ENCODE measurements at regions of chr11 and their contacts with region 1.

Region 1: DNA sequence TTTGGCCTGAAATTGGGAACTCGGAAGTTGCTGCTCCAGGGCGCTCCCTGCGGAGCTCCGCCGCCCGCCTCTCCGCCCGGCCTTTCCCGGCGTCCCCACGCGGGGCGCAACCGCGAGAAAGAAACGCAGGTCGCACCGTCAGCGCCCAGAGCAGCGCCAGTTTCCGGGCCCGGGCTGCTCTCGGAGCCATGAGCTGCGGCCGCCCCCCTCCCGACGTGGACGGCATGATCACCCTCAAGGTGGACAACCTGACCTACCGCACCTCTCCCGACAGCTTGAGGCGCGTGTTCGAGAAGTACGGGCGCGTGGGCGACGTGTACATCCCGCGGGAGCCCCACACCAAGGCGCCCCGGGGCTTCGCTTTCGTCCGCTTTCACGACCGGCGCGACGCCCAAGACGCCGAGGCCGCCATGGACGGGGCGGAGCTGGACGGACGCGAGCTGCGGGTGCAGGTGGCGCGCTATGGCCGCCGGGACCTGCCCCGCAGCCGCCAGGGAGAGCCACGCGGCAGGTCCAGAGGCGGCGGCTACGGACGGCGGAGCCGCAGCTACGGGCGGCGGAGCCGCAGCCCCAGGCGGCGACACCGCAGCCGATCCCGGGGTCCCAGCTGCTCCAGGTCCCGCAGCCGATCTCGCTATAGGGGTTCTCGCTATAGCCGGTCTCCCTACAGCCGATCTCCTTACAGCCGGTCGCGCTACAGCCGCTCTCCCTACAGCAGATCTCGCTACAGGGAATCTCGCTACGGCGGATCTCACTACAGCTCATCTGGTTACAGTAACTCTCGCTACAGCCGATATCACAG is 521 bp downstream of the SRSF8 start:
- DNase-seq: peak; percentile 90
- ATAC-seq: peak; percentile 88 to 90

Region 2: GRCh38 chr11:94973099-94973968 is 93.9 kb before region 1 on chr11 and contains the starts of genes CWC15 and KDM4D:
- intact Hi-C with region 1: loop called in 1 of 2 experiments (anchors 10 kb)
- DNase-seq: peak; percentile 96
- ATAC-seq: peak; percentile 100
- total RNA-seq, gene CWC15: 60.8 to 65.5 TPM
- total RNA-seq, gene KDM4D: 0.80 to 0.89 TPM

Region 3: GRCh38 chr11:95705485-95706124 is 638.4 kb after region 1 on chr11:
- intact Hi-C with region 1: loop called in 1 of 2 experiments (anchors 10 kb)
- DNase-seq: peak; percentile 88
- ATAC-seq: peak; percentile 98 to 99

Region 4: DNA sequence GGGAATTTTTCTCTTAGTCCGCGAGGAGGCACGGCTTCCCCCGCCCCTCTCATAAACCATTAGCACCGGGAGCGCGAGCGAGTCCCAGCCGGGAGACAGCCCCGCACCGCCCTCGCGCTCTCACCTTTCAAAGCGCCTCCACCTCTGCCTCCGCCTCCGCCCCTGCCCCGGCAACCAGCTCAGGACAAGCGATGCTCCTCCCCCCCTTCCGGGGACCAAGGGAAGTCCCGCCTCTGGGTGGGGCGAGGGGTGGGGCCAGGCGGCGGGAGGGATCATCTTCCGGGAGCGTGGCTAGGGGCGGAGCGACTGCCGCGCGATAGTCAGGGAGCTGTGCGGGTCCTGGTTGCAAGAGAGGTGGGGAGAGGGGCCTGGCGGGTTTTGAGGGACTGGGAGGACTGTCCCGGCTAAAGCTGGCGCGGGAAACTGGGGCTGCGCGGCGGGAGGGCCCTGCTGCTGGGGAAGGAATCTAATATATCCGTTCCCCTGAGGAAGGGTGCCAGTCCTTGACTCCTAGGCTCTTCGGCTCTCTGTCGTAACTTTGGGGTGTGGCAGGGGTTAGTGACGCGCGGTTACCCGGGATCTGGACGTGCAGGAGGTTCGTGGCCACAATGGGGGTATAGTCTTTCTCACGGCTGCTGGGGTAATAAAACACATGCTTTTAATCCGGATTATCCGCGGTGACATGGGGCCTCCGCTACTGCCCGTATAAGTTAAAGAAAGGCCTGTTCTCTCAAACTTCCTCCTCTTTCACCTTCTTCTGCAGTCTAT is 1322.7 kb after region 1 on chr11 and contains the starts of genes CCDC82 and JRKL:
- intact Hi-C with region 1: loop called in 1 of 2 experiments (anchors 10 kb)
- DNase-seq: peak; percentile 96
- ATAC-seq: peak; percentile 100
- total RNA-seq, gene CCDC82: 17.4 to 18.0 TPM
- total RNA-seq, gene JRKL: 7.0 to 7.3 TPM